ENCODE measurements at regions of chr3 and their contacts with region 1.

Region 1: DNA sequence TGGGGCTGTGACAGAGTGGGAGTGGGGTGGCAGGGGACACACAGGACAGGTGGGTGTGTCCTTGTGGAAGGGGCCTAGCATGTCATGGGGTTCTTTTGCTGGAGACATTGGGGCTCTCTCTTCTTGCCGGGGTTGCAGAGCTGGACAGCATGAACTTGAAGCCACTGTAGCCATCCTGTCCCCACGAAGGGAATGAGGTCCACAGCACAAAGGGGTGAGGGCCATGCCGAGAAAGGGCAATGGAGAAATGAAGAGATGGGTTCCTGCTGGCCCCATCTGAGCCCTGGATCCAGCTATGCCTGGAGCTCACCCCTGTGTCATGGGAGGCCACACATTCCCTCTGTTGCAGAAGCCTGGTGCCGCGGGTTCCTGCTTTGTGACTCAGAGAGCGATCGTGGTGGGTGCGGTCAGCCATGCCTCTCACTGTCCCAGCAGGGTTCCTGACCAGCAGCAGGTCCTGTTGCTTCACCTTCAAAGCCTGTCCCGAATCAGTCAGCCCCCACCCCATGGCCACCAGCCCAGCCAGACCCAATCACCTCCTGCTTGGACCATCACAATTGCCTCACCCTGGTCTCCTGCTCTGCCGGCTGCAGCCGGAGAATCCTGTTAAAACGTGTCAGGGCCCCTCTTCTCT is 50.0 kb downstream of the DNAJB8 start:
- DNase-seq: peak; percentile 96 to 98
- H3K4me3 ChIP-seq: no peak overlapping the region
- H3K27ac ChIP-seq: no peak overlapping the region
- H3K4me1 ChIP-seq: peaks cover 30% of the 10 kb centered on the region
- H3K27me3 ChIP-seq: no peaks in the 10 kb centered on the region
- CTCF ChIP-seq: no peak

Region 2: GRCh38 chr3:128226795-128227395 is 189.8 kb before region 1 on chr3:
- CTCF ChIA-PET with region 1: no interaction called
- POLR2A ChIA-PET with region 1: no interaction called
- intact Hi-C with region 1: loop called (anchors 5 kb)
- DNase-seq: peak in 1 of 2 experiments; percentile 68
- H3K4me3 ChIP-seq: no peak overlapping the region
- H3K27ac ChIP-seq: no peak overlapping the region
- H3K4me1 ChIP-seq: no peaks in the 10 kb centered on the region
- H3K27me3 ChIP-seq: no peaks in the 10 kb centered on the region
- CTCF ChIP-seq: peak; percentile 81

Region 3: GRCh38 chr3:128360705-128361271 is 55.9 kb before region 1 on chr3:
- CTCF ChIA-PET with region 1: no interaction called
- POLR2A ChIA-PET with region 1: no interaction called
- intact Hi-C with region 1: loop called (anchors 2 kb)
- DNase-seq: peak in 1 of 2 experiments; percentile 79
- H3K4me3 ChIP-seq: no peak overlapping the region
- H3K27ac ChIP-seq: peak overlapping the region; percentile 26
- H3K4me1 ChIP-seq: peaks cover 37% of the 10 kb centered on the region
- H3K27me3 ChIP-seq: no peaks in the 10 kb centered on the region
- CTCF ChIP-seq: no peak

Region 4: GRCh38 chr3:128383316-128384235 is 33.1 kb before region 1 on chr3:
- CTCF ChIA-PET with region 1: no interaction called
- POLR2A ChIA-PET with region 1: no interaction called
- intact Hi-C with region 1: loop called (anchors 1 kb)
- DNase-seq: peak; percentile 83 to 95
- H3K4me3 ChIP-seq: no peak overlapping the region
- H3K27ac ChIP-seq: peak overlapping the region; percentile 62
- H3K4me1 ChIP-seq: peaks cover 31% of the 10 kb centered on the region
- H3K27me3 ChIP-seq: no peaks in the 10 kb centered on the region
- CTCF ChIP-seq: no peak

Region 5: DNA sequence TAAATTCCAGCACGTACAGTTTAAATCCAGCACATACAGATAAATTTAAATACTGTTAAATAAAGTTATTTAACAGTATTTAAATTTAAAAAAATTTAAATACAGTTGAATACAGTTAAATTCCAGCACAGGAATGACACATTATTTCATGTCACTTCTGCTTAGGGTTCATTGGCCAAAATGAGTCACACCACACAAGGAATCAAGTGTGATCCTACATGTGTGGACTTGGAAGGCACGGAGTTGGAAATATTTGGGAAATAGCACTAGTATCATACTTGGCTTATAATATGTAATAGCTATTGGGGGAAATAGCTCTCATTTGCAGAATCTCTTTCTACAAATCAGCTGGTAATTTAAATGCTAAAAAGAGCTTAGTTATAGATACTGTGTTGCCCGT is 319.9 kb after region 1 on chr3:
- CTCF ChIA-PET with region 1: no interaction called
- POLR2A ChIA-PET with region 1: no interaction called
- intact Hi-C with region 1: no loop called
- DNase-seq: no peak
- H3K4me3 ChIP-seq: no peak overlapping the region
- H3K27ac ChIP-seq: no peak overlapping the region
- H3K4me1 ChIP-seq: no peaks in the 10 kb centered on the region
- H3K27me3 ChIP-seq: no peaks in the 10 kb centered on the region
- CTCF ChIP-seq: no peak

Region 6: DNA sequence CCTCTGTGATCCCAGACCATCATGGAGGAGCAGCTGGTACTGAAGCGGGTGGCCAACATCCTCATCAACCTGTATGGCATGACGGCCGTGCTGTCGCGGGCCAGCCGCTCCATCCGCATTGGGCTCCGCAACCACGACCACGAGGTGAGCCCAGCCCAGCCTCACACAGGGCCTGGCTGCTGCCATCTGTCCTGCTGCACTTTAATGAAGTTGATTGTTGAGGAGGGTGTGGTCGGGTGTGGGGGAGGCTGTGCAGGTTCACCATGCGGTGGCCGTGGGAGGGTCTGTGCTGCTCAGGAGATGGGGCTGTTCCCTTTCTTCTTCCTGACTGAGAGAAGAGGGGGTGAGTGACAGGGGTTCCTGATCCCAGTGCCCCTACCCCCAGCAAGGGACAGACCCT is 493.3 kb after region 1 on chr3:
- CTCF ChIA-PET with region 1: no interaction called
- POLR2A ChIA-PET with region 1: no interaction called
- intact Hi-C with region 1: no loop called
- DNase-seq: no peak
- H3K4me3 ChIP-seq: no peak overlapping the region
- H3K27ac ChIP-seq: no peak overlapping the region
- H3K4me1 ChIP-seq: no peaks in the 10 kb centered on the region
- H3K27me3 ChIP-seq: no peaks in the 10 kb centered on the region
- CTCF ChIP-seq: no peak

Measured in PC-9 (cell line).